Colonic mucosa (tissue), 4 donors: ENCODE measurements at regions of chr1 and their contacts with region 1.

Region 1: GRCh38 chr1:77143529-77144121 is 75.6 kb downstream of the PIGK start:
- DNase-seq: no peak
- H3K4me3 ChIP-seq: no peak overlapping the region
- H3K27ac ChIP-seq: no peak overlapping the region
- H3K4me1 ChIP-seq: no peaks in the 10 kb centered on the region
- H3K27me3 ChIP-seq: no peaks in the 10 kb centered on the region
- CTCF ChIP-seq: peak; percentile 39

Region 2: DNA sequence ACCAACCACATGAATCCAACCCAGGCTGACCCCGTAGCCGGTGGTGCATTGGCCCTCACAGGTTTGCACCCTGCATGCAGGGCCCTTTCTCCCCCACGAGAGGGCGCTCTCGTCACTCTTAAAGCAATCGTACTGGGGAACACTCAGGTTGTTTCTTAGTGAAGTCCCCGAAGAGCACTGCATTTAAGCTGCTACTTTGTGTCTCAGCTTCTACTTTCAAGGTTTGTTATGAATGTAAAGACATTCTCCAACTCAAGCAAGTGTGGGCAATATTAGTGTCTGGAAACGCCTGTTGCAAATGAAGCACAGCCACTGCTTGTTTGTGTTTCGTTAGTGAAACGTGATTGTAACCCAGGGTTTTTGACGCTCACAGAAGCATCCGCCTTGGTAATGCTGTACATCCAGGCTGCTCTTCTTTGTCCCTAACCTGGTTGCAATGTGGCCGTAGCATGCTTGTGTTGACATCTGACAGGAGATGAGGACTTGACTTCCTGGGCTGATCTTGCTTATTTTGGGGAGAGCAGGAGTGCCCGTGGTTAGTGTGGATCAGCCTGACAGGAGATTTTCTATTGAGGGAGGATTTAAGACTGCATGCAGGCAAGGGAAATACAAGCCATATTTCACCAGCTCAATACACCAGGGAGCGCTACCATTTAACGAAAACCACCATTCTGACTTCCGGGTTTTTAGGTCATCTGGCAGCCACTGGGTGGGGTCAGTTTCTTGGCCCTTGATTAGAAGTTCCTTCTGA is 989.2 kb before region 1 on chr1:
- intact Hi-C with region 1: loop called (anchors 5 kb)
- DNase-seq: peak; percentile 84
- H3K4me3 ChIP-seq: peak overlapping the region; percentile 22
- H3K27ac ChIP-seq: peak overlapping the region; percentile 14
- H3K4me1 ChIP-seq: no peaks in the 10 kb centered on the region
- H3K27me3 ChIP-seq: no peaks in the 10 kb centered on the region
- CTCF ChIP-seq: peak; percentile 100

Region 3: DNA sequence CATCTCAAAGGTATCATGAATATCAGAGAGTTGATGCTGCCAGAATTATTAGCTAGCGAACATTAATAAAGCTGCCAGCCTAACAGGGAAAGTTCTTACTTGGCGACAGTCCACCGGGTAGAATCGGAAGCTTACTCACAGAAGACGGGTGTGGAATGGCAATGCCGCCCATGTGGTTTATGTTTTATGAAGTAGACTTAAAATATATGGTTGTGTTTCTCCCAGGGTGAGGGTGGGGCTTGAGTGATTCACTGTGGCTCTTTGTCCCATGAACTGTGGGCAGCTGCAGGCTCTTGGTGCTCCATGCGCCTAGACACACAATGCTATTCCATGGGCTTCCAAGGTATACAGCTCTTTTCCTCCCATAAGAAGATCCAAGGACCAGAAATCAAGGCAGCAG is 87.1 kb before region 1 on chr1:
- intact Hi-C with region 1: no loop called
- DNase-seq: no peak
- H3K4me3 ChIP-seq: no peak overlapping the region
- H3K27ac ChIP-seq: no peak overlapping the region
- H3K4me1 ChIP-seq: no peaks in the 10 kb centered on the region
- H3K27me3 ChIP-seq: no peaks in the 10 kb centered on the region
- CTCF ChIP-seq: no peak

Region 4: GRCh38 chr1:77281491-77282186 is 138.0 kb after region 1 on chr1 and contains the start of gene AK5:
- intact Hi-C with region 1: no loop called
- DNase-seq: peak; percentile 19
- H3K4me3 ChIP-seq: peak within 1 kb of the TSS; percentile 34
- H3K27ac ChIP-seq: no peak within 1 kb of the TSS
- H3K4me1 ChIP-seq: no peaks in the 10 kb centered on the region
- H3K27me3 ChIP-seq: peaks cover 35% of the 10 kb centered on the region
- CTCF ChIP-seq: no peak
- total RNA-seq, gene AK5: 0.49 to 1.1 TPM

Region 5: GRCh38 chr1:77538956-77539518 is 395.4 kb after region 1 on chr1:
- intact Hi-C with region 1: loop called (anchors 5 kb)
- DNase-seq: no peak
- H3K4me3 ChIP-seq: no peak overlapping the region
- H3K27ac ChIP-seq: peak overlapping the region; percentile 22
- H3K4me1 ChIP-seq: no peaks in the 10 kb centered on the region
- H3K27me3 ChIP-seq: no peaks in the 10 kb centered on the region
- CTCF ChIP-seq: no peak

Region 6: DNA sequence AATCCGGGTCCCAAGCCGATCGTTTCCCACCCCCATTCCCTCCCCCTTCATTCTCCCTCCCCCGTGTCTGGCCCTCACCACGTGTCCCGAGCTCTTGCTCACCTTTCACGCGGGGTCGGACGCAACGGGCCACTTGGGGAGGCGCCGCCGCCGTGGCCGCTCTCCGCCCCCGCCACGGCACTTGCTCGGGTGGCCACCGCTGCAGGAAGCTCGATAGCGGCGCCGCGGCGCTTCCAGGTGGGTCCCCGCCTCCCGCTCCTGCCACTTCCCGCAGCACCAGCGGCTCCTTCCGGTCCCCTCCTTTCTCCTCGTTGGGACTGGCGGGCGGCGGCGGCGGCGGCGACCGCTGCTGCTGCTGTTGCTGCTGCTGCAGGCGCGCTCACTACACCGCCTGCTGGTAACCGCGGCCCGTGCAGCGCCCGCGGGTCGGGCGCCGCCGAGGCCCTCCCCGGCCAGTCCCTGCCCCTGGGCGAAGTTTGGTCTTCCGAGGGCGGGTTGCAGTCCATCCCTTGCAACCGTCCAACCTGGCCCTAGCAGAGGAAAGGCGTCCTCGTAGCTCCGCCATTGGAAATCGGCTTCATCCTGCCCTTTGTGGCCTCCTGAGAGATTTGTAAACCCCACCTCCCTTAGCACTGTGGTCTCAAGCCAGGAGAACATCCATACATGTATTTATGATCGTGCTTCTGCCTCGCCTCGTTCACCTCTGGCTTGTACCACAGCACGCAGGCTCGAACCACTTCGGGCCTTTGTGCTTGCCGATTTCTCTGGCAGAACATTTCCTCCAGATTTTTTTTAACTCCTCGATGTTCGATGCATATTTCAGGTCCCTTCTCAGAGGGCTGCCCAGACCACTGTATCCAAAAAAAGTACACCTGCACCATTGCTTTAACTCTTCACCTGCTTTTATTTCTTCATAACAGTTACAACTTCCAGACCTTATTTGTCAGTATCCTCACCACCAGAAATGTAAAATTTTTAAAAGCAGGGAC is 539.8 kb after region 1 on chr1:
- intact Hi-C with region 1: loop called (anchors 10 kb)
- DNase-seq: peak; percentile 91
- H3K4me3 ChIP-seq: peak overlapping the region; percentile 88
- H3K27ac ChIP-seq: peak overlapping the region; percentile 88
- H3K4me1 ChIP-seq: peaks cover 5% of the 10 kb centered on the region
- H3K27me3 ChIP-seq: no peaks in the 10 kb centered on the region
- CTCF ChIP-seq: peak; percentile 92